ENCODE measurements at regions of chr12 and their contacts with region 1.

Region 1: GRCh38 chr12:46124848-46125619 is 134.7 kb upstream of the SCAF11 start:
- DNase-seq: peak; percentile 60 to 62 (median 62)
- H3K4me3 ChIP-seq: no peak overlapping the region
- H3K4me3 Mint-ChIP-seq: peak overlapping the region; percentile 34 to 76 (median 62)
- H3K27ac ChIP-seq: no peak overlapping the region
- H3K27ac Mint-ChIP-seq: peak overlapping the region in 5 of 7 donors; percentile 85 to 95 (median 89)
- H3K4me1 ChIP-seq: peaks cover 4% of the 10 kb centered on the region
- H3K4me1 Mint-ChIP-seq: peaks cover 3 to 6% (median 4%) of the 10 kb centered on the region in 4 donors
- H3K27me3 ChIP-seq: no peaks in the 10 kb centered on the region
- H3K27me3 Mint-ChIP-seq: peaks cover 8 to 15% of the 10 kb centered on the region in 2 donors

Region 2: GRCh38 chr12:46144433-46144832 is 19.4 kb after region 1 on chr12:
- CTCF ChIA-PET with region 1: interaction called, 13 read pairs
- POLR2A ChIA-PET with region 1: no interaction called
- intact Hi-C with region 1: no loop called
- DNase-seq: no peak
- H3K4me3 ChIP-seq: no peak overlapping the region
- H3K4me3 Mint-ChIP-seq: no peak overlapping the region
- H3K27ac ChIP-seq: no peak overlapping the region
- H3K27ac Mint-ChIP-seq: no peak overlapping the region
- H3K4me1 ChIP-seq: no peaks in the 10 kb centered on the region
- H3K4me1 Mint-ChIP-seq: no peaks in the 10 kb centered on the region
- H3K27me3 ChIP-seq: peaks cover 3% of the 10 kb centered on the region
- H3K27me3 Mint-ChIP-seq: peaks cover 10 to 26% of the 10 kb centered on the region in 2 donors

Region 3: DNA sequence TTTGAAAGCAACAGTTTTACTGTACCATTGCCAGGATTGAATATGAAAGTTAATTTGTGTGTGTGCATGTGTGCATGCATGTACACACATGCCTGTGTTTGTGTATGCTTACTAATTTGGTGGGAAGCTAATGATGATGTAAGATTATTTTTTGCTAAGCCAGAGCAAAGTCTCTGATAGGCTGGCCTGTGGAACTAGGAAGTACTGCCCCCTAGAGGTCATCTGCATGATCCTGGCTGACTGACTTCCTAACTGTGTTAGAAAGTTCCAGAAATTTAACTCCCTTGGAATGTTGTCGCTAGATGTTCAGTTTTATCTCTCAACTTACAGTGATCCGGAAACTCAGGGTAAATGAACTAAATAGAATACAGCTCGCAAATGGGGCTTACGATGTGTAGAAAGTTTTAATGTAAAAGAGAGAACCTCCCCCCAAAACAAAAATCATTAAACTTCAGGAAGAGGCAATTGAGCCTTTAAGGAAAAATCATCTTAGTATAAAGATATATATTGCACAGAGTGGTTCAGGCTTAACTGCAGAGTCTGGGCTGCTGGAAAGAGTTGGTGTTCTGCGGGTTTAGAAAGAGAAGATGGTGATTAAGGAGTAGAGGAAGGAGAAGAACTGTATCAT is 178.1 kb after region 1 on chr12:
- CTCF ChIA-PET with region 1: interaction called, 126 read pairs
- POLR2A ChIA-PET with region 1: interaction called, 3 read pairs
- intact Hi-C with region 1: loop called (anchors 1 kb)
- DNase-seq: peak; percentile 52 to 69 (median 62)
- H3K4me3 ChIP-seq: no peak overlapping the region
- H3K4me3 Mint-ChIP-seq: no peak overlapping the region
- H3K27ac ChIP-seq: no peak overlapping the region
- H3K27ac Mint-ChIP-seq: no peak overlapping the region
- H3K4me1 ChIP-seq: no peaks in the 10 kb centered on the region
- H3K4me1 Mint-ChIP-seq: peaks cover 3 to 4% (median 4%) of the 10 kb centered on the region in 4 donors
- H3K27me3 ChIP-seq: no peaks in the 10 kb centered on the region
- H3K27me3 Mint-ChIP-seq: no peaks in the 10 kb centered on the region

Region 4: GRCh38 chr12:46675736-46676135 is 550.7 kb after region 1 on chr12:
- CTCF ChIA-PET with region 1: interaction called, 9 read pairs
- POLR2A ChIA-PET with region 1: no interaction called
- intact Hi-C with region 1: loop called (anchors 1 kb)
- DNase-seq: peak in 4 of 5 donors; percentile 15 to 36 (median 22)
- H3K4me3 ChIP-seq: no peak overlapping the region
- H3K4me3 Mint-ChIP-seq: no peak overlapping the region
- H3K27ac ChIP-seq: no peak overlapping the region
- H3K27ac Mint-ChIP-seq: no peak overlapping the region
- H3K4me1 ChIP-seq: no peaks in the 10 kb centered on the region
- H3K4me1 Mint-ChIP-seq: no peaks in the 10 kb centered on the region
- H3K27me3 ChIP-seq: no peaks in the 10 kb centered on the region
- H3K27me3 Mint-ChIP-seq: peaks cover 2 to 3% of the 10 kb centered on the region in 2 donors

Region 5: DNA sequence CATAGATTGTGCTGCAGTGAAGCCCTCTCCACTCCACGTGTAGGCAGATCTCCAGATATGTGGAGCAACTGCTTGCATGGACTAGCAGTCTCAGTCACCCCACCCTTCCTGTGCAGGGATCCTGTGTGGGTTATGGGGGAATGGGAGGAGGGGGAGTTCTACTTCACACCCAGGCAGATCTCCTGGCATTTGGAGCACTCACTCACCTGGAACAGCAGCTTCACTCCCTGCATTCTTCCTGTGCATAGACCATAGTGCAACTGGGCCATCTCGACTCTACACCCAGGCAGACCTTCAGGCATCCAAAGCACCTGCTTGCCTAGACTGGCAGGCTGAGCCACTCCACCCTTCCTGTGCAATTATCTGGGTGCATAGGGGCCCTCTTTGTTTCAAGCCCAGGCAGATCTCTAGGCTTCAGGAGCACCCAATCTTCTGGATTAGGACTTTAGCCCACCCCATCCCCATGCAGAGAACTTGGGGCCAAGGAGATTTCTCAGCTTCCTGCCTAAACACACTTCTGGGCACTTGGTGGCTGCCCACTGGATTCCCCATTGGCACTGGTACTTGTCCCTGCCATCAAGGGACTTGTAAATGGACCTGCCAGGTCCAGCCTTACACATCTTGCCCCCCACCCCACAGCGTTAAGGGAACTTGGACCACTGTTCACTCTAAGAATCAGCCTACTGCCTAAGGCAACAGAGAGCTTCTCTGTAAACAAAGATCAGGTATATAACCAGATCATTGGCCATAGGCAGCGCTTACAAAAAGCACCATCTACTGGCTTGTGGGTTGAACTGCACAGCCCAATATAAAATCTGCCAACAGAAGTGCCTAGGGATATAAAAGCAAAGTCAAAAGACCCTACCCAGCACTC is 858.6 kb after region 1 on chr12:
- CTCF ChIA-PET with region 1: interaction called, 8 read pairs
- POLR2A ChIA-PET with region 1: interaction called, 3 read pairs
- intact Hi-C with region 1: loop called (anchors 1 kb)
- DNase-seq: peak; percentile 21 to 37 (median 26)
- H3K4me3 ChIP-seq: no peak overlapping the region
- H3K4me3 Mint-ChIP-seq: peak overlapping the region in 1 of 8 donors; percentile 20
- H3K27ac ChIP-seq: no peak overlapping the region
- H3K27ac Mint-ChIP-seq: no peak overlapping the region
- H3K4me1 ChIP-seq: peaks cover 9% of the 10 kb centered on the region
- H3K4me1 Mint-ChIP-seq: peaks cover 0 to 7% (median 3%) of the 10 kb centered on the region in 4 donors
- H3K27me3 ChIP-seq: peaks cover 4% of the 10 kb centered on the region
- H3K27me3 Mint-ChIP-seq: peaks cover 26 to 34% of the 10 kb centered on the region in 2 donors

Region 6: DNA sequence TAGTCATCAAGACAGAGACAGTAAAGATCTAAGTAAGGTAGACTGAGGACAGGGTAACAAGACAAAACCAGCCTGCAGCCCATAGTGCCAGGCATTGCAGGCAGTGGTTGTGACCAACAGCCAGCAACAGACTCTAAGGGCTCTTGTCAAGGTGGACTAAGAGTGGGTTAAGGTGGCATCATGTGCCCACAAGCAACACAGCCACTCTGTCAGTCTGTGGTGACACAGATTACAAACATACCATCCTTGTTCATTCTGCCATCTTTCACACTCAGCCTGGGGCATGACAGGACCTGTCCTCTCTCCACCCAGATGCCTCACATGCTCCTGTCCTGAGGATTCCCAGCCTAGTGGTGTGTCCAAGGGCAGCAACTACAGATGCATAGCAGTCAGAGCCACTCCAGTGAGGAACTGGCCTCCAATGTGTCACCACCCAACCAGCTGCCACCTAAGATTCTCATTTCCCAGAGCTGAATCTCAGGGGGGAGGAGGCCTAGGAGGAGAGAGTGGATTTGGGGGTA is 1751.5 kb after region 1 on chr12:
- CTCF ChIA-PET with region 1: no interaction called
- POLR2A ChIA-PET with region 1: no interaction called
- intact Hi-C with region 1: no loop called
- DNase-seq: no peak
- H3K4me3 ChIP-seq: no peak overlapping the region
- H3K4me3 Mint-ChIP-seq: no peak overlapping the region
- H3K27ac ChIP-seq: no peak overlapping the region
- H3K27ac Mint-ChIP-seq: no peak overlapping the region
- H3K4me1 ChIP-seq: no peaks in the 10 kb centered on the region
- H3K4me1 Mint-ChIP-seq: no peaks in the 10 kb centered on the region
- H3K27me3 ChIP-seq: no peaks in the 10 kb centered on the region
- H3K27me3 Mint-ChIP-seq: no peaks in the 10 kb centered on the region

Measured in CD4-positive, alpha-beta memory T cell (primary cell).